ENCODE measurements at regions of chr19 and their contacts with region 1.

Region 1: DNA sequence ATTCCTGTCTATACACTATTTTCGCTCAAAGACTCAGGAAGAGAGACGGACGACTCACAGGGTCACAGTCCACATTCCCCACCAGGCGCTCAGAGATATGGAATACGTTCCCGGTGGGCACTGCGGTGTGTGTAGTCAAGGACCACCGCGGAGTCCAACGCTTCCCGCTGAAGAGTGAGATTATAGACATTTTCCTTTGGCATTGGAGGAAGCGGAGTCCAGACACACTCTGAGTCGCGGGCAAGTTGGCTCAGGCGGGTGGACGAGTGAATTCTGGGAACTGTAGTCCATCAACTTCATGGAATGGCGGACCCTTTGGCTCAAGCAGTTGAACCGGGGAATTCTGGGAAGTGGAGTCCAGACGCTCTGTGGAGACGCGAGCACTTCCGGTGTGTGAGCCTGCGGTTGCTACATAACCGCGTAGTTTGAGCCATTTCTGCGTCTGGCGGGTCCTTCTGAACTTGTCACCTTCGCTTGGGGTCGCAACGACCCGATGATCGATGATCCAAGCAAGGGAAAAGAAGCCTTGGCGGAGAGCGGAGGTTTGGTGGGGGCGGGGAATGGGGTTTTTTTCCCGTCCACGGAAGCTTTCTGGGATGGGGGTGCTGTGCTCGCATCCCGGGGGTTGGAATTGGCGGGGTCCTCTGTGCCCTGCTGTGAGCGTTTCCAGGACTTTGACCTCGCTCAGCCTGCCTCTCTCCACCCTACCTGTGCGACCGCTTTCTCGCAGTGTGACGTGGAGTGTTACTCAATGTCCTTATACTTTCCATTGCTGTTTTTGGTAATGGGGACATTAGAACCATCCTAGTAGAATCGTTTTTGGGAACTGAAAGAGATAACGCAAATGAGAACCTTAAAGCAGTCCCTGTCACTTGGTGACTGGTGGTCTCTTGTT is at the start of gene ZNF230:
- DNase-seq: peak; percentile 76 to 97
- H3K4me3 ChIP-seq: peak within 1 kb of the TSS; percentile 78 to 80
- H3K27ac ChIP-seq: peak within 1 kb of the TSS; percentile 53 to 69
- H3K4me1 ChIP-seq: peaks cover 0 to 9% of the 10 kb centered on the region in 2 donors
- H3K27me3 ChIP-seq: no peaks in the 10 kb centered on the region
- CTCF ChIP-seq: no peak
- total RNA-seq, gene ZNF230: 0.32 TPM

Region 2: GRCh38 chr19:43826787-43827754 is 175.7 kb before region 1 on chr19 and contains the start of gene ZNF283:
- intact Hi-C with region 1: loop called (anchors 5 kb)
- DNase-seq: peak; percentile 60 to 94
- H3K4me3 ChIP-seq: peak within 1 kb of the TSS; percentile 56 to 75
- H3K27ac ChIP-seq: peak within 1 kb of the TSS; percentile 48 to 51
- H3K4me1 ChIP-seq: peaks cover 3 to 10% of the 10 kb centered on the region in 2 donors
- H3K27me3 ChIP-seq: no peaks in the 10 kb centered on the region
- CTCF ChIP-seq: no peak
- total RNA-seq, gene ZNF283: not detected

Region 3: DNA sequence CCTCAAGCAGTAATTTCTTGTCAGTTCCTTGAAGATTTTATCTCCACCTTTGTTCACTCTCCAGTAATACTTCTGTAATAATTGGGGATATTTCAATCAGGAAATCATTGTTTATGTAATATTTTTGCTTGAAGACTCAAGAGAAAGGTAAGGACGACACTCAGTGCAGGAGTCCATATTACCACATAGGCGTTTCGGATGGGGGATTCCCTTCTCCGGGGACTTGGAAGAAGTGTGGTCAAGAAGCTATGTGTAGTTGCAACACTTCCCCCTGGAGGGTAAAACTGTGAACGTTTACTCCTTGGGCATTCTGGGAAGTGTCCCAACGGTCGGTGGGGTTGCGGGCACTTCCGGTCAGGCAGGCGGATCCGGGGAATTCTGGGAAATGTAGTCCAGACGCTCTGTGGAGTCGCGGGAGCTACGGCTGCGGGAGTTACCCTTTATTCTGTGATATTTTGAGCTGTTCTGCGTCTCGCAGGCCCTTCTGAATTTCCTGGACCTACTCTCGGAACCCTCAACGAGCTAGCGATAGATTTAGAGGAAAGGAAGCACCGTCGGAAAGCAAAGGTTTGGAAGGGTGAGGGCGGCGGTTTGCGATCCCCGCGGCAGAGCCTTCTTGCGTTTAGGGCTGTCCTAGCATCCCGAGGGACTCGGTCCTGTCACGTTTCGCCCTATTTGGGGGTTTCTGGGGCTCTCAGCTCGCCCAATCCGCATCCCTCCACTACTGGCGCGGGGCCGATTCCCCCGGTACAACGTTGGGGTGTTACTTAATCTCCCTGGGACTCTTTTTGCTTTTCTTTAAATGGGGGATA is 51.8 kb before region 1 on chr19 and contains the start of gene ZNF221:
- intact Hi-C with region 1: loop called (anchors 1 kb)
- DNase-seq: peak; percentile 58 to 94
- H3K4me3 ChIP-seq: peak within 1 kb of the TSS; percentile 72 to 88
- H3K27ac ChIP-seq: peak within 1 kb of the TSS; percentile 57 to 73
- H3K4me1 ChIP-seq: no peaks in the 10 kb centered on the region
- H3K27me3 ChIP-seq: no peaks in the 10 kb centered on the region
- CTCF ChIP-seq: peak; percentile 22 to 52 (median 47)
- total RNA-seq, gene ZNF221: 2.6 TPM

Region 4: DNA sequence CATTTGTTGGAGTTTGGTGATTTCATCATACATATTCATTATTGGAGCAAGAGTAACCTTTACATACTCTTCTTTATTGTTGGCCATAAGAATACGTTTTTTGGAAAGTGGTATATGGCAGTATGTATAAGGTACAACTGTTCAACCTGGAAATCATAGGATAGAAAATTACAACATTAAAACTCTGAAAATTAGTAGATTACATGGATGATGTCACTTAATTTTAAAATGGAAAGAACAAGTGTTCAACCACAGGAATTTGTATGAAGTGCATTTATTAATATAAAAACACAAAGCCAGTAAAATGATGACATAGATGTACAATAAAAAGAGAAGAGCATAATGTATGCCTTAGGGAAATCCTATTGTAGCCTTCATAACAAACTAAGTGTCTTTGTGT is 26.1 kb before region 1 on chr19:
- intact Hi-C with region 1: no loop called
- DNase-seq: no peak
- H3K4me3 ChIP-seq: no peak overlapping the region
- H3K27ac ChIP-seq: no peak overlapping the region
- H3K4me1 ChIP-seq: no peaks in the 10 kb centered on the region
- H3K27me3 ChIP-seq: no peaks in the 10 kb centered on the region
- CTCF ChIP-seq: no peak

Region 5: DNA sequence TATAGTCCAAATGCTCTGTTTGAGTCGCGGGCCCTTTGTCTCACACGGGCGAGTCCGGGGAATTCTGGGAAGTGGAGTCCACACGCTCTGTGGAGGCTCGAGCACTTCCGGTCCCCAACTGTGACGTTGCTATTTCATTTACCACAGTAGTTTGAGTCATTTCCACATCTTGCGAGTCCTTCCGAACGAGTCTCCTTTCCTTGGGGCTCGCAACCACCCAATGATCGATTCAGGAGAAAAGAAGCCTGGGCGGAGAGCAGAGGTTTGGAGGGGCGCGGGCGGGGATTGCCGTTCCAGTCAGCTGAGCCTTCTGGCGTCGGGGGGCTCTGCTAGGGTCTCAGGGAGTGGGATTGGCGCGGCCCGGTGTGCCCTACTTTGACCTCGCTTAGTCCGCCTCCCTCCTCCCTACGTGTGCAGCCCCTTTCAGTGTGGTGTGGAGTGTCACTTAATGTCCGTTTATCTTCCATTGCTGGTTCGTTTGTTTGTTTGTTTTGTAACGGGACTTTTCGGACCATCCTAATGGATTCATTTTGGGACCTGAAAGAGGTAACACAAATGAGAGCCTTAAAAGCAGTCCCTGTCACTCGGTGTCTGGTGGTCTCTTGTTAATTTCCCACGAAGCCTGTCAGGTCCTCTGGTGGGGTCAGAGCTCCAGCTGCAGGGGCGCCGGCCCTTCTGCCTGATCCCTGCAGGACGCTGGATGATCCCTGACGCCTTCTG is 22.6 kb after region 1 on chr19 and contains the start of gene ZNF222:
- intact Hi-C with region 1: loop called (anchors 1 kb)
- DNase-seq: peak; percentile 38 to 91
- H3K4me3 ChIP-seq: peak within 1 kb of the TSS; percentile 70 to 84
- H3K27ac ChIP-seq: peak within 1 kb of the TSS; percentile 29 to 57
- H3K4me1 ChIP-seq: peaks cover 2 to 3% of the 10 kb centered on the region in 2 donors
- H3K27me3 ChIP-seq: no peaks in the 10 kb centered on the region
- CTCF ChIP-seq: no peak
- total RNA-seq, gene ZNF222: 0.43 TPM

Region 6: DNA sequence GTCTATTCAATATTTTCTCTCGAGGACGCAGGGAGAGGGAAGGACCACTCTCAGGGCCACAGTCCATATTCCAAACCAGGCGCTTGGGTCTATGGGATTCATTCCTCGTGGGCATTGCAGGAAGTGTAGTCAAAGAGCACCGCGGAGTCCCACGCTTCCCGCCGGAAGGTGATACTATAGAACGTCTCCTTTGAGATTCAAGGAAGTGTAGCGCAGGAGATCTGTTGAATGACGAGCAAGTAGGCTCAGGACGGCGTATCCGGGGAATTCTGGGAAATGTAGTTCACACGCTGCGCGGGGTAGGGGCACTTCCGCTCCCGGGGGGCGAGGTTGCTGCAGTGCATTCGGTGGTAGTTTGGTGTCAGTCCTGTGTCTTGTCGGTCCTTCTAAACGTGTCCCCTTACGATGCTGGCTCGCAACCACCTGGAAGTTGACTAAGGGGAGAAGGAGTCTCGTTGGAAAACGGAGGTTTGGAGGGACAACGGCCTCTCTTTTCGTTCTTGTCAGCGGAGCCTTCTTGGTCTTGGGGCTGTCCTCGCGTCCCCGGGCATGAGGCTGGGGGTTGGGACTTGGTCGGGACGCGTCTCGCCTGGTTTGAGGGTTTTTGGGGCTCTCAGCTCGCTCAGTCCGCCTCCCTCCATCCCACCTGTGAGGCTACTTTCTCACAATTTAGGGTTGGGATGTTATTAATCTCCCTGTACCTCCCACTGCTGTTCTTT is 69.2 kb after region 1 on chr19 and contains the start of gene ZNF284:
- intact Hi-C with region 1: loop called (anchors 5 kb)
- DNase-seq: peak; percentile 54 to 92
- H3K4me3 ChIP-seq: peak within 1 kb of the TSS; percentile 44 to 79
- H3K27ac ChIP-seq: peak within 1 kb of the TSS; percentile 12 to 48
- H3K4me1 ChIP-seq: peaks cover 0 to 9% of the 10 kb centered on the region in 2 donors
- H3K27me3 ChIP-seq: no peaks in the 10 kb centered on the region
- CTCF ChIP-seq: no peak
- total RNA-seq, gene ZNF284: 0.21 TPM

Region 7: GRCh38 chr19:44212250-44212865 is 209.5 kb after region 1 on chr19 and contains the start of gene ZNF227:
- intact Hi-C with region 1: loop called (anchors 2 kb)
- DNase-seq: peak; percentile 71 to 97
- H3K4me3 ChIP-seq: peak within 1 kb of the TSS; percentile 70 to 71
- H3K27ac ChIP-seq: peak within 1 kb of the TSS; percentile 73 to 78
- H3K4me1 ChIP-seq: no peaks in the 10 kb centered on the region
- H3K27me3 ChIP-seq: no peaks in the 10 kb centered on the region
- CTCF ChIP-seq: no peak
- total RNA-seq, gene ZNF227: 7.1 TPM

Measured in ascending aorta (tissue), 2 donors.